ENCODE measurements at regions of chrX and their contacts with region 1.

Region 1: GRCh38 chrX:24081661-24082264 is 27.0 kb downstream of the EIF2S3 start:
- DNase-seq: peak in 1 of 2 donors; percentile 70
- H3K4me3 ChIP-seq: no peak overlapping the region
- H3K27ac ChIP-seq: no peak overlapping the region
- H3K4me1 ChIP-seq: no peaks in the 10 kb centered on the region
- H3K27me3 ChIP-seq: no peaks in the 10 kb centered on the region
- CTCF ChIP-seq: peak in 2 of 3 experiments; percentile 44 to 45

Region 2: GRCh38 chrX:24241822-24242648 is 160.3 kb after region 1 on chrX:
- intact Hi-C with region 1: loop called (anchors 2 kb)
- DNase-seq: no peak
- H3K4me3 ChIP-seq: no peak overlapping the region
- H3K27ac ChIP-seq: no peak overlapping the region
- H3K4me1 ChIP-seq: peaks cover 0 to 4% of the 10 kb centered on the region in 2 donors
- H3K27me3 ChIP-seq: no peaks in the 10 kb centered on the region
- CTCF ChIP-seq: peak in 2 of 3 experiments; percentile 33 to 40

Region 3: GRCh38 chrX:24760363-24761000 is 678.7 kb after region 1 on chrX:
- intact Hi-C with region 1: no loop called
- DNase-seq: no peak
- H3K4me3 ChIP-seq: no peak overlapping the region
- H3K27ac ChIP-seq: no peak overlapping the region
- H3K4me1 ChIP-seq: no peaks in the 10 kb centered on the region
- H3K27me3 ChIP-seq: no peaks in the 10 kb centered on the region
- CTCF ChIP-seq: no peak